Activated CD4-positive, alpha-beta memory T cell treated with anti-CD3 and anti-CD28 coated beads for 36 hours (primary cell): ENCODE measurements at regions of chr1 and their contacts with region 1.

Region 1: DNA sequence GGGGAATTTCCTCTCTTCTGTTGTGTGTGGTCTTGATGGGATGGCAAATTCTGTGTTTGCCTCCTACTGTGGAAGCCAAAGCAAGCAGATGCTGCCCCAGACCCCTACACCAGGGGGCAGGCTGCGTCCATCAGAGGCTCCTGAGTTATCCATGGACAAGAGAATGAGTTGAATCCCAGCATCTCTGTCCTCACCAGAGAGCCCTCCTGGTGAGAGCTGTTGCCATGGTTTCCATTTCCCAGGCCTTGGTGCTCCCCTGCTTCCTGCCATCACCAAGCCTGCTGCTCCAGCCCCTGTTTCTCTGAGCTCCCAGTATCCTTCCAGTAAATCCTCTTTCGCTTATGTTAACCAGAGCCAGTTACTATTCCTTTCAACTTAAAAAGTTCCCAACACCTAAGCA is 20.4 kb upstream of the GNG12 start:
- DNase-seq: peak; percentile 19
- H3K4me3 Mint-ChIP-seq: no peak overlapping the region
- H3K27ac Mint-ChIP-seq: no peak overlapping the region
- H3K4me1 Mint-ChIP-seq: no peaks in the 10 kb centered on the region
- H3K27me3 Mint-ChIP-seq: peaks cover 12% of the 10 kb centered on the region

Region 2: DNA sequence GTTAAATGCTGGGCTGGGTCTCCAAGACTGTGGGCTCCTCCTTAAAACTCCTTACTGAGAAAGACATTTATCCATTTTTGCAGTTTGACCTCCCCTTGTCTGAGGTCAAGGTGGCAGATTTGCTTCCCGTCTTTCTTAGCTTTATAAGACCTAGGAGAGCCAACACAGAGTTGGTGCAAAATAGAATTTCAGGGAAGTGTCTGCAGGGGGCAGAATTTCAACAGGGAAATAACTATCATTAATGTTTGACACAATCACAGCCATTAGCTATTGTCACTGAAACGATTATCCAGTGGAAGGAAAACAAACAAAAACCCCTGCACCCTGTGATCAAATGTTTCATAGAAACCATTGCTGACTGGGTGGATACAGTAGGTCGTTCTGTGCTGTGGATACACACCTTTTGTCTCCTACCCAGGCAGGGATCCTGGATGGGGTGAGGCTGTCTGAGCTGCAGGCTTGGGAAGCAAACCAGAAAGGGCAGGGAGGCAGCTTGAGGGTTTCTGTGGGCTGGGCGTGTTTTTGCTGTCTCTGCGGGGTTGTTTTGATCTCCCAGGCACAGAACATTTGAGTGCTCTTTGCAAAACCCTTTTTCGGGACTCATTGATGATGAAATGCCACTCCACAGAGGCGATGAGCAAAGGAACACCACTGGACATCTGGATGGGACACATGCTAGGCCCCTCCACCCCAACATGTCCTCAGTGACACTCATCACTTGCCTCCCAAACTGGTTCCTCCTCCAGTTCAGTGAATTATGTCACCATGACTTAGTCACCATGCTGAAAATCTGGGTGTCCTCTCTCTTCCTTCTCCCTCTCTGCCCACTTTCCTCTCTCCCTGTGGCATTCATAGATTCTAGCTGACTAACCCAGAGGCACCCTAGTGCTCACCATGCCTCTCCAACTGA is 329.3 kb before region 1 on chr1:
- CTCF ChIA-PET with region 1: no interaction called
- POLR2A ChIA-PET with region 1: no interaction called
- intact Hi-C with region 1: no loop called
- DNase-seq: no peak
- H3K4me3 Mint-ChIP-seq: no peak overlapping the region
- H3K27ac Mint-ChIP-seq: no peak overlapping the region
- H3K4me1 Mint-ChIP-seq: no peaks in the 10 kb centered on the region
- H3K27me3 Mint-ChIP-seq: peaks cover 8% of the 10 kb centered on the region

Region 3: DNA sequence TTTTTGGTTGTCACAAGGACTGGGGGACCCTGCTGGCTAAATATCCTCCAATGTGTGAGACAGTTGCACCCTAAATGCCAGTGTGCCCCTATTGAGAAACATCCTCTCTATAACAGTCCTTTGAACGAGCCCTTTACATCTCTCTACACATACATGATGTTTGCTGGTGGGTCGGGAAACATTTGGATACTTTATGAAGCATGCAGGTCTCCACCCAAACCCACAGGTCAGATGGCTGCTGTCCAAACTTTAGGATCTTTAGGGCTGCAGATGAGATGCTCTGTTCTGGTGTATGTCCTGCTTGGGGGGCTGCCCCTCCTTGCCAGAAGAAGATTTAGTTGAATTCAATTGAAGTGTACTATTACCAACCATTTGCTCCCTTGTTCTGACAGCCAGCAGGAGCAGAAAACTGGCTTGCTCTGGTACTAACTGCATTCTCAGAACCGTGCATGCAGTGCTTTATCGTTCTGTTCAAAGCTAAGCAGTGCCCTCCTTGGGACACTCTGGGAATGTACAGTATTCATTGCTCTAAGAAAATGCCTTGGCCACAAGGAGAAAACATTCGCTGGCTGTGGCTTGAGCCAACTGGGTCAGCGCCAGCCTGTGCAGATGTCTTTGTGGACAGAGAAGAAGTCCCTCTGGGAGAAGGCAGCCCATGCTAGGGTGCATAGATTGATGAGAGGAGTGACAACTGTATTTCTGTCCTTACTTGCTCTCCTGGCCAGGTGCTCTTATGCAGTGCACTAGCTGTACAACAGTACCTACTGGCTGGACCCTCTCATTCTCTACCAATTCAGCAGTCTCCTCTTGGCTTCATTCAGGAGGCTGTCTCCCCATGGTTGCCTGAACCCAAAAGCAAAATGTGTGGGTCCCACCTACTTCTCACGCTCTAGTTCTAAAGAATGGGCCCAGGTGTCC is 258.1 kb after region 1 on chr1:
- CTCF ChIA-PET with region 1: no interaction called
- POLR2A ChIA-PET with region 1: no interaction called
- intact Hi-C with region 1: loop called (anchors 5 kb)
- DNase-seq: no peak
- H3K4me3 Mint-ChIP-seq: no peak overlapping the region
- H3K27ac Mint-ChIP-seq: no peak overlapping the region
- H3K4me1 Mint-ChIP-seq: peaks cover 4% of the 10 kb centered on the region
- H3K27me3 Mint-ChIP-seq: no peaks in the 10 kb centered on the region